HAP-1 (cell line): ENCODE measurements at regions of chr1 and their contacts with region 1.

Region 1: DNA sequence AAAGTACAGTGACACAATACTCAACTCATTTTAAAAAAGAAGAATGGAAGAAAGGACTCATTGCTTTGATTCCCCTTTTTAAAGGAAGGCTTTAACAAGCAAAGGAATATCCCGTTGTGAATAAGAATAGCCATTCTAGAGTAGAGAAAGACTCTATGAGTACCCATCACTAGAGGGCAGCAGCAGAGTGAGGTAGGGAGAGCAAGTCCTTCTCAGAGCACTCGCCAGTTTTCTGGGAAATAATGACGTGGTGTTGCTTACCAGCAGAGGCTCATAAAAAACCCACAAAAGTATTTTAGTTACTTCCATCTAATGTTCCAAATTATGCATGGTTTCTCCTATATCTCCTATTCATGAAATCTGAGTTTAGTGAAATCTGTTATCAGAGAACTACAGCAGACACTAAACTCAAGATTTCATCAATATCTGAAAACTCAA is 74.6 kb downstream of the USP24 start:
- DNase-seq: peak; percentile 87 to 95
- H3K4me3 ChIP-seq: no peak overlapping the region
- H3K4me1 ChIP-seq: peaks cover 6% of the 10 kb centered on the region
- H3K27me3 ChIP-seq: no peaks in the 10 kb centered on the region

Region 2: GRCh38 chr1:55277377-55278130 is 137.0 kb after region 1 on chr1:
- in situ Hi-C with region 1: loop called (anchors 5 kb)
- DNase-seq: peak; percentile 55 to 89
- H3K4me3 ChIP-seq: no peak overlapping the region
- H3K4me1 ChIP-seq: 0 out of 2 replicates have a peak, but pooled peaks cover 3% of the 10 kb centered on the region
- H3K27me3 ChIP-seq: no peaks in the 10 kb centered on the region